Caco-2 (cell line): ENCODE measurements at regions of chr2 and their contacts with region 1.

Region 1: DNA sequence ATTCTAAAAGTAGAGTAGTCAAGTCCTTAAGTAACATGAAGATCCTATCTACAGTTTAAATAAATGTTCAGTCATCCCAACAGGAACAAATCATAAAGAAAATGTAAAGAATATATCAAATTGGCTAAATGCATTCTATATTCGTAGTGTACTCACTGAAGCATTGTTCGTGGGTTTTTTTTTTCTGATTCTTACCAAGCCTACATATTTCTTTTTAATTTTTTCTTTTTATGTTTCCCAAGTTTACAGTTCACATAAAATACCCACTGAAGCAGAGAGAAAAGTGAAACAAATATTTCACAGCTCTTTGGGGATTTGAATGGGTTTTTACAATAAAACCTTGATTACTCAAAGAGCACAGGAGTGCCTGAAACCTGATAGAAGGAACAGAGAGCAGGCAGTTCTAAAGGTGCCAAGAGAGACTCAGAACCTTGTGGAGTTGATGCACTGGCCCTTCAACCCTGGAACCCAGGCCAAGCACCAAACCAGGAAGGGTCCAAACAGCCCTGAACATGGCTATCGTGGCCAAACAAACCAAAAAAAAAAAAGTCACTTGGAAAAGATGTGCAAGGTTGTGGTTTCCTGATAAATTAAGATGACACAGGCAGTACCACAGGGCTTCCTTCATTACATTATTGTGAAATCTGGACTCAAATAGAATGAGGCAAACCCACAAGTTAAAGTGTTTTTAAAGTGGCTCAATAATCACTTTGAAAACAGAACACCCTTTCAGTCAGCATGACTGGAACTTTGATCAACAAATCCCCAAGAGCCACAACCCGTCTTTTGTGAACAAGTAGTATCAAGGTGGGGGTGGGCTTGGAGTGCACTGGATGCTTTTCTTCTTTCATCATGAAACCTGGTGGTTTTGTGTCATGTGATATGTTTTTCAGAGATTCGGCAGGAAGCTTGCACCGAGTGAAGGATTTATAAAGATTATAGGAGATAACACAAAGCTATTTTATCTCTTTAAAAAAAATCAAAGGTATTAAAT is 245.0 kb upstream of the FN1 start:
- DNase-seq: peak; percentile 85 to 92
- H3K4me3 ChIP-seq: no peak overlapping the region
- H3K4me3 Mint-ChIP-seq: peak overlapping the region; percentile 48
- H3K27ac Mint-ChIP-seq: peak overlapping the region; percentile 93
- H3K4me1 ChIP-seq: peaks cover 61% of the 10 kb centered on the region
- H3K4me1 Mint-ChIP-seq: peaks cover 56% of the 10 kb centered on the region
- H3K27me3 ChIP-seq: no peaks in the 10 kb centered on the region
- H3K27me3 Mint-ChIP-seq: no peaks in the 10 kb centered on the region
- CTCF ChIP-seq: no peak

Region 2: GRCh38 chr2:215418064-215418963 is 262.6 kb before region 1 on chr2:
- CTCF ChIA-PET with region 1: no interaction called
- POLR2A ChIA-PET with region 1: no interaction called
- intact Hi-C with region 1: loop called (anchors 1 kb)
- DNase-seq: no peak
- H3K4me3 ChIP-seq: no peak overlapping the region
- H3K4me3 Mint-ChIP-seq: no peak overlapping the region
- H3K27ac Mint-ChIP-seq: peak overlapping the region; percentile 82
- H3K4me1 ChIP-seq: peaks cover 91% of the 10 kb centered on the region
- H3K4me1 Mint-ChIP-seq: peaks cover 49% of the 10 kb centered on the region
- H3K27me3 ChIP-seq: no peaks in the 10 kb centered on the region
- H3K27me3 Mint-ChIP-seq: no peaks in the 10 kb centered on the region
- CTCF ChIP-seq: no peak

Region 3: DNA sequence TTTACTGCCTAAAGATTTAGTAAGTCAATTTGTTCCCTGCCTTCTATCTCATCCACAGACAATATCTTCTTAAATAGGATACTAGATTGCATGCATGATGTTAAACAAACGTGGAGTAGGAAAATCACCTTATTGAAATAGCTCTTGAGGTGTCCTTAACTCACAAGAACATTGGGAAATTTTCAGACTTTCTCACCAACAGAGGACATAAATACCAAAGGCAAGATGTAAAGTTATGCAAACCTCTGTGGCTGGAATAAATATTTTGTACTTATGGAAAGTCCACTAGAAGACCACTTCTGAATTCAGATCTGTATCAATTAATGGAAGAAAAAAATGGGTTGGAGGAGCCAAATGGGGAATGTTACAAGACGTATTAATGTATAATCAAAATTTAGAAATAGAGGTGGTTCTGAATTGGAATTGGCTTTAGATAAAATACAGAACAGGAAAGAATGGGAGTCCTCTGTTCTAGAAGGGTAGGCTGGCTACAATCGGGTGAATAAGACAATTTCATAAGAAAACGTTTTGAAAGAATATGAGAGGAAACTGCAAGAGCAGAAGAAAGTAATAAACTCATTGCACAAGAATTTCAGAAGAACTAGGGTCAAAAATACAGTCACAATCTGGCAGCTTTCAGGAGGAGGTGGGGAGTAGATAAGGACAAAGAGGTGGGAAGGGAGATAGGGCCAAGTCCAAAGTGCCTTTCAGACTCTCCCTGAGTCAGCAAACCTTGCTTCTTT is 175.7 kb before region 1 on chr2:
- CTCF ChIA-PET with region 1: no interaction called
- POLR2A ChIA-PET with region 1: no interaction called
- intact Hi-C with region 1: loop called (anchors 1 kb)
- DNase-seq: peak; percentile 68 to 70
- H3K4me3 ChIP-seq: no peak overlapping the region
- H3K4me3 Mint-ChIP-seq: peak overlapping the region; percentile 54
- H3K27ac Mint-ChIP-seq: peak overlapping the region; percentile 46
- H3K4me1 ChIP-seq: peaks cover 42% of the 10 kb centered on the region
- H3K4me1 Mint-ChIP-seq: peaks cover 38% of the 10 kb centered on the region
- H3K27me3 ChIP-seq: no peaks in the 10 kb centered on the region
- H3K27me3 Mint-ChIP-seq: no peaks in the 10 kb centered on the region
- CTCF ChIP-seq: no peak

Region 4: GRCh38 chr2:215693193-215693998 is 12.5 kb after region 1 on chr2:
- CTCF ChIA-PET with region 1: no interaction called
- POLR2A ChIA-PET with region 1: interaction called, 5 read pairs
- intact Hi-C with region 1: loop called (anchors 1 kb)
- DNase-seq: no peak
- H3K4me3 ChIP-seq: no peak overlapping the region
- H3K4me3 Mint-ChIP-seq: peak overlapping the region; percentile 23
- H3K27ac Mint-ChIP-seq: peak overlapping the region; percentile 83
- H3K4me1 ChIP-seq: peaks cover 49% of the 10 kb centered on the region
- H3K4me1 Mint-ChIP-seq: peaks cover 60% of the 10 kb centered on the region
- H3K27me3 ChIP-seq: no peaks in the 10 kb centered on the region
- H3K27me3 Mint-ChIP-seq: no peaks in the 10 kb centered on the region
- CTCF ChIP-seq: no peak

Region 5: GRCh38 chr2:215729985-215730620 is 49.2 kb after region 1 on chr2:
- CTCF ChIA-PET with region 1: no interaction called
- POLR2A ChIA-PET with region 1: no interaction called
- intact Hi-C with region 1: no loop called
- DNase-seq: no peak
- H3K4me3 ChIP-seq: no peak overlapping the region
- H3K4me3 Mint-ChIP-seq: no peak overlapping the region
- H3K27ac Mint-ChIP-seq: peak overlapping the region; percentile 45
- H3K4me1 ChIP-seq: peaks cover 40% of the 10 kb centered on the region
- H3K4me1 Mint-ChIP-seq: peaks cover 22% of the 10 kb centered on the region
- H3K27me3 ChIP-seq: no peaks in the 10 kb centered on the region
- H3K27me3 Mint-ChIP-seq: no peaks in the 10 kb centered on the region
- CTCF ChIP-seq: no peak

Region 6: DNA sequence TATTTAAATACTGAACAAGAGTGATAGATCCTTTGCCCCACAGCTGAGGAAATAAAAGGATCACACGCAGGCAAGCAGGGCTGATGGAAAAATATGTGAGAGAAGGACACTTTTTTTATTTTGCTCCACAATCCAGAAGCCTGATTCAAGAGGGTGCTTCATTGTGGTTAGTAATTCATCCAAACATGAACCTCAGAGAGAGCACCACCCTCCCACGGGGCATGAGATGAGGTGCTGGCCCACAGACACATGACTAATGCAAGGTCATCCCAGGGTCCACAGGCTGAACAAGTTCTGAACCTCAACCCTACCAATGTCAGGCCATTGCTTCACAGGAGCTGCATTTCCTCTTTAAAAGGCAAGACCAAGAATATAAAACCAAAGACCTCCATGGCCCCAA is 92.8 kb after region 1 on chr2:
- CTCF ChIA-PET with region 1: no interaction called
- POLR2A ChIA-PET with region 1: no interaction called
- intact Hi-C with region 1: loop called (anchors 1 kb)
- DNase-seq: no peak
- H3K4me3 ChIP-seq: no peak overlapping the region
- H3K4me3 Mint-ChIP-seq: no peak overlapping the region
- H3K27ac Mint-ChIP-seq: peak overlapping the region; percentile 56
- H3K4me1 ChIP-seq: peaks cover 35% of the 10 kb centered on the region
- H3K4me1 Mint-ChIP-seq: peaks cover 32% of the 10 kb centered on the region
- H3K27me3 ChIP-seq: no peaks in the 10 kb centered on the region
- H3K27me3 Mint-ChIP-seq: no peaks in the 10 kb centered on the region
- CTCF ChIP-seq: no peak

Region 7: DNA sequence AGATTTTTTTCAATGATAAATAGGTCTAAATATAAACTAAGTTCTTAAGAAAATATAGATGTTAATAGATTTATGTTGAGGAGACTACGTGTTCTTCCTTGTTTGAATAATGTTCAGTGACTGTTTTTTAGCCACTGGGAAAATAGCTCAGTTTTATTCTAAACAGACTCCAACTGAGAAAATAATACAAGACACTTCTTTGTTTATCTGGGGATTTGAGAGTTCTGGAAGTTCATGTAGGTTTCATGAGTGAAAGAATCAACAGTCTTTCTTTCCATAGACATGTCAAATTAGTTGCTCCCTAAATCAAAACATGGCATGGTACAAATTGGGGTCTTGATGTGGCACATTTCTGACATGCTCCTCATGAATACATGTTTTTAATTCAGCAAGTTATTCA is 154.8 kb after region 1 on chr2:
- CTCF ChIA-PET with region 1: no interaction called
- POLR2A ChIA-PET with region 1: no interaction called
- intact Hi-C with region 1: no loop called
- DNase-seq: no peak
- H3K4me3 ChIP-seq: no peak overlapping the region
- H3K4me3 Mint-ChIP-seq: no peak overlapping the region
- H3K27ac Mint-ChIP-seq: no peak overlapping the region
- H3K4me1 ChIP-seq: peaks cover 33% of the 10 kb centered on the region
- H3K4me1 Mint-ChIP-seq: peaks cover 18% of the 10 kb centered on the region
- H3K27me3 ChIP-seq: no peaks in the 10 kb centered on the region
- H3K27me3 Mint-ChIP-seq: no peaks in the 10 kb centered on the region
- CTCF ChIP-seq: no peak

Region 8: DNA sequence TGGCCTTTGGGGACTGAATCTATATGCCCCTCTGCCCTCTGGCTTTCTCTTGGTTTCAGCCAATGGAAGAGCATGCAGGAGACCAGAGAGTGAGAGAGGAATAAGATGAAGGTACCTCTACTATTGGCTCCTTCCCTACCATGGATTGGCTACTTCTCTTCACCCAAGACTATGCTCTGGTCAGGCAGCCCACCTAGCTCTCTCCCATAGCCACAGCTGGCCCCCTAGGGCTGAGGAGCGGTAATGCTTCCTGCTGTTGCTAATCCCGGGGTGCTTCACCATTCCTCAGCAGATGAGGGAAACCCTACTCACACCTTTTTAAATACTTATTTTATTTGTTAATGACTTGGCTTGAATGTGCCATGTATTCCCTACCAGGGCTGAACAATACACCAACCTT is 190.1 kb after region 1 on chr2:
- CTCF ChIA-PET with region 1: no interaction called
- POLR2A ChIA-PET with region 1: no interaction called
- intact Hi-C with region 1: loop called (anchors 2 kb)
- DNase-seq: peak; percentile 60 to 61
- H3K4me3 ChIP-seq: no peak overlapping the region
- H3K4me3 Mint-ChIP-seq: no peak overlapping the region
- H3K27ac Mint-ChIP-seq: peak overlapping the region; percentile 99
- H3K4me1 ChIP-seq: peaks cover 24% of the 10 kb centered on the region
- H3K4me1 Mint-ChIP-seq: peaks cover 41% of the 10 kb centered on the region
- H3K27me3 ChIP-seq: no peaks in the 10 kb centered on the region
- H3K27me3 Mint-ChIP-seq: no peaks in the 10 kb centered on the region
- CTCF ChIP-seq: peak; percentile 34 to 62

Region 9: DNA sequence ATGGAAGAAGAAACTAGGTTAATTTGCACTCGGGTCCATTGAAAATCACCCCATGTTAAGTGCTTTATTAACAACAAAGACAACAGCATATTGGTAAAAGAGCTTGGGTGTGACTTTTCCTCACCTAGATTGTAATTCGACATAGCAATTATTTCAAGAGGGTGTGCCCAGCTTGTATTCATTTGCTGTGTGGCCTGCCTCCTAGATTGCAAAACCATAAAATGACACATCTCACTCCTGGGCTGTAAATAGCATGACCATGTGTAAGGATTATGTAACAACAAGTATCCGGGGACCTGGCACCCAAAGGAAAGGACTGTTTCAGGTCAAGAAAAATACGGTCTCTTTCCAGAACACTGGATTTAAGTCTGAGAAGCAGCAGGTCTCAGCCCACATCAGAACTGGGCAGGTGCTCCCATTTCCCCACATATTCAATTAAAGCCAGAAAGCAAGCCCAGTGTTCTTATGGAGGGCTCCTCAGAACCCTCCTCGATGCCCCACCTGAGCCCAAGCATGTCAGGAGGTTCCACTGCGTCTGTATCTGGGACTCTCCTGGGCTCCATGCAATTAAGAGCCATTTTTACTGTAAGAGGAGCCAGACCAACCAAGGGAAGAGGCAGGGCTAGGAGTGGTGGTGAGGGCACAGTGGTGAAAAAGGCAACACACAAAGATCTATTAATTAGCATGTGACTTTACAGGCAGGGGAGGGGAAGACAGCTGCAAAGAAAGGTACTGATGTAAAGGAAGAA is 293.2 kb after region 1 on chr2:
- CTCF ChIA-PET with region 1: no interaction called
- POLR2A ChIA-PET with region 1: no interaction called
- intact Hi-C with region 1: no loop called
- DNase-seq: peak in 1 of 2 experiments; percentile 27
- H3K4me3 ChIP-seq: no peak overlapping the region
- H3K4me3 Mint-ChIP-seq: no peak overlapping the region
- H3K27ac Mint-ChIP-seq: no peak overlapping the region
- H3K4me1 ChIP-seq: no peaks in the 10 kb centered on the region; the same call in 1 of the 2 replicates
- H3K4me1 Mint-ChIP-seq: peaks cover 14% of the 10 kb centered on the region
- H3K27me3 ChIP-seq: no peaks in the 10 kb centered on the region
- H3K27me3 Mint-ChIP-seq: no peaks in the 10 kb centered on the region
- CTCF ChIP-seq: no peak